Endothelial cell of umbilical vein (primary cell): ENCODE measurements at regions of chr9 and their contacts with region 1.

Region 1: GRCh38 chr9:110040788-110041187 is 167.2 kb downstream of the C9orf152 start:
- DNase-seq: no peak
- H3K4me3 ChIP-seq: no peak overlapping the region
- H3K27ac ChIP-seq: peak overlapping the region; percentile 8
- H3K4me1 ChIP-seq: peaks cover 24% of the 10 kb centered on the region
- H3K27me3 ChIP-seq: no peaks in the 10 kb centered on the region
- CTCF ChIP-seq: no peak
- POLR2A ChIP-seq: no peak

Region 2: DNA sequence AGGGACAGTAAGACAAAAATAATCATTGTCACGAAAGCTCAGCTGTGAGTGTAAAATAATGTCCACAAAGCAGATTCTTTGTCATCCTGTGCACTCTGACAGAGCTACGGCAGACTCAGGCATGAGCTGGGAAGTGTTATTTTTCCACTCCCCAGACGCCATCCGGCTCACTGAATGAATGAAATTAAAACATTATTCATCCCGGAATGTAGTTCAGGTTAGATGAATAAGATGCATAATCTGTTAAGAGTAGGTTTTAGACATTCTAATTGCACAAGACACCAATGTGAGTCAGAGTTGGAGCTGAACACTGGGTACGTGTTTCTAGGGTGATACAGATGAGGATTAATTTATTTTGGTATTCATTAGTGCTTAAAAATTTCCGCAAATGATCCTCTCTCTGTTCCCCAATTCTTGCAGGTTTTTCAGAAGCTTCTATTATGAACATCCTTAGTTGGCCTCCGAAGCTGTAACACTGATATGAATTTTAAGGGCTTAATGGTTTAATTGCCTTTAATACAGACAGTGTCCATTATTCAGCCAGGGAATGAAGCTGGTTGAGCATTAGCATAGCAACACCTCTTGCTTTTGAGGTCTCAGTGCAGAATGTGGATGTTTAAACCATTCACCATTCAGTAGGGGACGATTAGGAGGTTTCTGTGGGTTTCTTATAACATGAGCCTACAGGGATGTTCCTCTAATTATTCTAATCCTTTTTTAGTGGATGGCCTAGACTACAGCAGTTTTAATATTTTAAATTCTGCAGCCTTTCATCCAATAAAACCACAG is 808.1 kb before region 1 on chr9:
- CTCF ChIA-PET with region 1: no interaction called
- POLR2A ChIA-PET with region 1: no interaction called
- dilution Hi-C with region 1: no loop called
- intact Hi-C with region 1: no loop called
- DNase-seq: no peak
- H3K4me3 ChIP-seq: no peak overlapping the region
- H3K27ac ChIP-seq: no peak overlapping the region
- H3K4me1 ChIP-seq: no peaks in the 10 kb centered on the region
- H3K27me3 ChIP-seq: peaks cover 6 to 8% of the 10 kb centered on the region in 2 experiments
- CTCF ChIP-seq: no peak
- POLR2A ChIP-seq: no peak

Region 3: GRCh38 chr9:109859433-109859832 is 181.4 kb before region 1 on chr9:
- CTCF ChIA-PET with region 1: no interaction called
- POLR2A ChIA-PET with region 1: no interaction called
- dilution Hi-C with region 1: no loop called
- intact Hi-C with region 1: no loop called
- DNase-seq: no peak
- H3K4me3 ChIP-seq: no peak overlapping the region
- H3K27ac ChIP-seq: no peak overlapping the region
- H3K4me1 ChIP-seq: no peaks in the 10 kb centered on the region
- H3K27me3 ChIP-seq: peaks cover 14 to 23% of the 10 kb centered on the region in 2 experiments
- CTCF ChIP-seq: no peak
- POLR2A ChIP-seq: no peak

Region 4: GRCh38 chr9:109918339-109919163 is 122.2 kb before region 1 on chr9:
- CTCF ChIA-PET with region 1: interaction called, 3 read pairs
- POLR2A ChIA-PET with region 1: interaction called, 10 read pairs
- dilution Hi-C with region 1: no loop called
- intact Hi-C with region 1: no loop called
- DNase-seq: peak; percentile 69
- H3K4me3 ChIP-seq: no peak overlapping the region
- H3K27ac ChIP-seq: no peak overlapping the region
- H3K4me1 ChIP-seq: peaks cover 20% of the 10 kb centered on the region
- H3K27me3 ChIP-seq: no peaks in the 10 kb centered on the region
- CTCF ChIP-seq: no peak
- POLR2A ChIP-seq: no peak

Region 5: DNA sequence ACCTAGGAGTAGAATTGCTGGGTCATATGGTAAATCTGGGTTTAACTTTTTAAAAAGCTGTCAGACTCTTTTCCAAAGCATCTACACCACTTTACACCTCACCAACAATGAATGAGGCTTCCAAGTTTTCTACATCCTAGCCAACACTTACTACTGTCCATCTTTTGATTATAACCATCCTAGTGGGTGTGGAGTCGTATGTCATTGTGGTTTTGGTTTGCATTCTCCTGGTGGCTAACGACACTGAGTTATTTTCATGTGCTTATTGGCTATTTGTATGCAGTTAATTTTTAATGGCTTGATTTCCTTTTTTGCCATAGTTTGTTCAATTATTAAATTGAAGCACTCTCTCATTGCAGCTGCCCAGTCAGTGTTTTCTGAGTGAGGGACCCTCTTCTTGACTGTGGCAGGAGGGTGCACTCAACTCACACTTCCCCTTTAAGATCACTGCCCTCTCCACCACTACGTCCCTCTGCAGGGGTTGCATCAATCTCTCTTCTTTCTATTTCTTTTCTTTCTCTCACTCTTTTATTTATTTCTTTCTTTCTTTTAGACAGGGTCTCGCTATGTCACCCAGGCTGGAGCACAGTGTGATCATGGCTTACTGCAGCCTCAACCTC is 15.1 kb before region 1 on chr9:
- CTCF ChIA-PET with region 1: no interaction called
- POLR2A ChIA-PET with region 1: no interaction called
- dilution Hi-C with region 1: no loop called
- intact Hi-C with region 1: no loop called
- DNase-seq: no peak
- H3K4me3 ChIP-seq: no peak overlapping the region
- H3K27ac ChIP-seq: no peak overlapping the region
- H3K4me1 ChIP-seq: peaks cover 45% of the 10 kb centered on the region
- H3K27me3 ChIP-seq: no peaks in the 10 kb centered on the region
- CTCF ChIP-seq: no peak
- POLR2A ChIP-seq: no peak